Heart left ventricle (tissue), 16 donors: ENCODE measurements at regions of chr15 and their contacts with region 1.

Region 1: DNA sequence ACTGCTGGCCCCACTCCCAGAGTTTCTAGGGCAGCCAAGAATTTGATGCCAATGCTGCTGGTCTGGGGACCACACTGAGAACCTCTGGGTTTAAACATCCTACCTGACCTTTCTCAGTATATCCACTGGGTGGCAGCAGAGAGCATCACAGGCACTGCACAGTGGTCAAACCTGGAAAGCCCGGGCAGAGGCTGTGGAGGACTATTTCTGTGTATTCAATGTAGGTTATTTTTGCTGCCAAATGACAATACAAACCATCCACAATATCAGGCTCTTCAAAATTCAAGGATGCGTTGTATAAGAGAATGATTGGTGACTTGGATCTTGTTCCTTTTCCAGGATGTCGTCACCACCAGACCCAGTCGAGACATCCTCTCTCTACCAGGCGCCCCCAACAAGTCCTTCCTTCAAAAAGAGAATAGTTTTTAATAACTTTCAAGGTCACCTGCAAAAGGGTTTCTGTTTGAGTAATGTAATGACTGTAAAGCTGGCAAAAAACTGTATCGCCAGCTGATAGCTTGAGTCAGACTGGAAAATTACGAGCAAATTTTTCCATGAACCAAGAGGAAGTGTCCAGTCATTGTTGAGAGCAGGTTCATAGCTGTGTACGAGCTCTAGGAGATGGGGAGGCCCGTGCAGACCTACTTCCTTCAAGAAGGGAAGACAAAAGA is 30.5 kb upstream of the MYZAP start:
- DNase-seq: peak; percentile 70 to 82 (median 80)
- ATAC-seq: peak; percentile 84 to 92 (median 88)
- H3K4me3 ChIP-seq: peak overlapping the region in 5 of 12 donors; percentile 1 to 36 (median 18)
- H3K27ac ChIP-seq: peak overlapping the region; percentile 6 to 82 (median 72)
- H3K4me1 ChIP-seq: peaks cover 0 to 36% (median 20%) of the 10 kb centered on the region in 12 donors
- H3K27me3 ChIP-seq: no peaks in the 10 kb centered on the region
- CTCF ChIP-seq: peak; percentile 84 to 97 (median 93)
- POLR2A ChIP-seq: no peak

Region 2: GRCh38 chr15:57591646-57592367 is 30.6 kb after region 1 on chr15 and contains the start of gene MYZAP:
- intact Hi-C with region 1: loop called in 4 of 10 experiments (anchors 1 to 5 kb)
- DNase-seq: peak; percentile 66 to 82 (median 78)
- ATAC-seq: peak in 3 of 4 donors; percentile 28 to 72 (median 68)
- H3K4me3 ChIP-seq: peak within 1 kb of the TSS; percentile 47 to 94 (median 75)
- H3K27ac ChIP-seq: peak within 1 kb of the TSS; percentile 79 to 96 (median 94)
- H3K4me1 ChIP-seq: peaks cover 0 to 53% (median 23%) of the 10 kb centered on the region in 12 donors
- H3K27me3 ChIP-seq: peaks cover 0 to 6% (median 0%) of the 10 kb centered on the region in 9 donors
- CTCF ChIP-seq: peak in 2 of 12 donors; percentile 11 to 15
- POLR2A ChIP-seq: peak in 1 of 2 donors; percentile 91
- total RNA-seq, gene MYZAP: 359 to 1,065 (median 670) TPM

Region 3: GRCh38 chr15:57635300-57635909 is 74.2 kb after region 1 on chr15:
- intact Hi-C with region 1: loop called in 6 of 10 experiments (anchors 5 kb)
- DNase-seq: peak in 4 of 5 donors; percentile 53 to 77 (median 59)
- ATAC-seq: peak; percentile 79 to 87 (median 84)
- H3K4me3 ChIP-seq: no peak overlapping the region
- H3K27ac ChIP-seq: peak overlapping the region; percentile 67 to 92 (median 80)
- H3K4me1 ChIP-seq: peaks cover 0 to 81% (median 45%) of the 10 kb centered on the region in 12 donors
- H3K27me3 ChIP-seq: no peaks in the 10 kb centered on the region
- CTCF ChIP-seq: peak in 6 of 12 donors; percentile 2 to 33 (median 26)
- POLR2A ChIP-seq: no peak

Region 4: GRCh38 chr15:57654153-57654852 is 93.1 kb after region 1 on chr15:
- intact Hi-C with region 1: loop called in 3 of 10 experiments (anchors 5 kb)
- DNase-seq: no peak
- ATAC-seq: no peak
- H3K4me3 ChIP-seq: peak overlapping the region in 1 of 12 donors; percentile 6
- H3K27ac ChIP-seq: peak overlapping the region in 8 of 12 donors; percentile 4 to 70 (median 62)
- H3K4me1 ChIP-seq: peaks cover 0 to 54% (median 19%) of the 10 kb centered on the region in 12 donors
- H3K27me3 ChIP-seq: no peaks in the 10 kb centered on the region
- CTCF ChIP-seq: no peak
- POLR2A ChIP-seq: no peak

Region 5: DNA sequence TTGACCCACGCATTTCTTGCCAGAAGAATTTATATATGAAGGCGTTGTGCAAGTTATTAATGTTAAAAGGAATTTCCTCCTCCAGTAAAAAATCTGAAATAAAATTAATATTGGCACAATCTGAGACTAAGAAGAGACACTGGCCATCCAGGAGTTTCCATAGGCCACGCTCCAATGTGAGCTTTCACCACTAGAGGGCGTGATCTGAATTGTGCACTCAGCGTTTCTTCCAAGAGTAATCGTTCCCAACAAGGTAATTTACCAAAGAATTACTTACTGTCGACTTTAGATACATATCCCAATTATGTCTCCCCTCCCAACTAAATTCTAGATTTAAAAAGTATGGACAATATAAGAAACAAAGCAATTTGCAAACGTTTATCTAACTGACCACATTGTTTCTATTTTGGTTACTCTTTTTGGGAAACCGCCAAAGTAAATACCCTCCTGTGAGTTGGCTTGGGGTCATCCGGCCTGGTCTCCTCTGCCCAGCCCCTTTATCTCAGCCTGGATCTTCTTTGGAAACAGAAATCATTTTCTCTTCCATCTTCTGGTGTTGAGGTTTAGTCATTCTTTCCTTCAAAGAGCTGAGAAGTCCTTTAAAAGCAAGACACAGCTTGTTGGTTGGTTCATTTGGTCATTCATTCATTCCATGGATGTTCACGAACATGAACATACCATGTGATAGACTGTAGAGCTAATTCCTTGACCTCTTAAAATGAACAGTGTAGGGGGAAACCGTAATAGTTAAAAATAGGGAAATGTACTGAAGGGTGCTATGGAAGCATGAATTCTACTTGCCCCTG is 171.6 kb after region 1 on chr15:
- intact Hi-C with region 1: loop called in 3 of 10 experiments (anchors 5 to 10 kb)
- DNase-seq: peak in 3 of 5 donors; percentile 35 to 52 (median 37)
- ATAC-seq: peak in 2 of 4 donors; percentile 58 to 69
- H3K4me3 ChIP-seq: no peak overlapping the region
- H3K27ac ChIP-seq: no peak overlapping the region
- H3K4me1 ChIP-seq: peaks cover 0 to 10% (median 4%) of the 10 kb centered on the region in 12 donors
- H3K27me3 ChIP-seq: no peaks in the 10 kb centered on the region
- CTCF ChIP-seq: peak; percentile 80 to 93 (median 88)
- POLR2A ChIP-seq: no peak

Region 6: DNA sequence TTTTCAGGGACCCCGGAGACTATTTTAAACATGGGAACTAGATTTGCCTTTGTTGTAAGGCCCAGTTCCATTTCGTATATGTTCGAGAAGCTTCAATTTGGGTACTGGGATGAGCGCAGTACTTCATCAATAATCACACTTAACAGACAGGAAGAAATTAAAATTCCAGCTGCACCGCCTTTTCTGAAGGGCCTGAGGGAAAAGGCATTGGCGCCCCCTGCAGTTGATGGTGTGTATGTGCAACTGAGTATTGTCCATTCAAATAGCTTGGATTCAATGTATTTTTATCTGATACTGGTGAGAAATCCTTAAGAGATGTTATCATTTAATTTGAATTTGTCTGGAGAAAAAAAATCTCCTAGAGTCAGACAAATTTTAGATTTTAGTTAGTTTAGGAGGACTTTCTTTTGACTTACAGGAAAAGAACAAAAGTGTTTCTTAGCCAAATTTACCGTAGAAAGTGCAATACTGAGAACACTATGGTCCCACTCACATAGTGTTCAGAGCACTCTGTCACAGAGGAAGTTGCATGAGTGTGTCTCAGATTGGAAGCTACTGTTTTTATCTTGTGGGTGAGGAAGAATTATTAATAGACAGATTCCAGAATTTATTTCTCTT is 509.7 kb after region 1 on chr15:
- intact Hi-C with region 1: loop called in 6 of 10 experiments (anchors 2 to 10 kb)
- DNase-seq: peak; percentile 44 to 77 (median 53)
- ATAC-seq: peak in 1 of 4 donors; percentile 44
- H3K4me3 ChIP-seq: no peak overlapping the region
- H3K27ac ChIP-seq: no peak overlapping the region
- H3K4me1 ChIP-seq: peaks cover 0 to 7% (median under 1%) of the 10 kb centered on the region in 12 donors
- H3K27me3 ChIP-seq: peaks cover 0 to 35% (median 3%) of the 10 kb centered on the region in 9 donors
- CTCF ChIP-seq: peak; percentile 88 to 98 (median 94)
- POLR2A ChIP-seq: no peak